GM12878 (cell line): ENCODE measurements at regions of chr1 and their contacts with region 1.

Region 1: DNA sequence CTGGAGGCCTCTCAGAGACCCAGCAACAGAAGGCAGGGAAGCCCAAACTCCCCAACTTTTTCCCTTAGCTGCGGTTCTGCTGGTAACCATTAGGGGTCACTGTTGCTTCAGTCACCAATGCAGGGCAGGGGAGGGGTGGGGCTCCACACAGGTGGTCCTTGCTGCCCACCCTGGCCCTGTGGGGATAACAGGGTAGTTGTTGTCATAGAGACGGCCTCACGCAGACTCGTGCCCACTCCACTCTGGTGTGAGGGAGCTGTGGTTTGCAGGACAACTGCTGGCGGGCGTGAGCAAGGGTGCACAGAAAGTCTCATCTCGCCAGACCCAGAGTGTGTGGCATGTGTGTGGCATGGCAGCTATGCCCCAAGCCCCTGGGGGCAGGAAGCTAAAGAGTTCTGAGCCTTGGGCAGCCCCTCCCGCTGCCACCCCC is 19.9 kb downstream of the INSRR start:
- DNase-seq: no peak
- ATAC-seq: peak; percentile 57
- H3K4me3 ChIP-seq: no peak overlapping the region
- H3K27ac ChIP-seq: no peak overlapping the region
- H3K4me1 ChIP-seq: peaks cover 24% of the 10 kb centered on the region
- H3K27me3 ChIP-seq: no peaks in the 10 kb centered on the region; a peak in 1 of 4 replicates
- CTCF ChIP-seq: peak; percentile 80 to 94 (median 91)
- EP300 ChIP-seq: no peak
- POLR2A ChIP-seq: no peak
- RAD21 ChIP-seq: peak; percentile 86

Region 2: DNA sequence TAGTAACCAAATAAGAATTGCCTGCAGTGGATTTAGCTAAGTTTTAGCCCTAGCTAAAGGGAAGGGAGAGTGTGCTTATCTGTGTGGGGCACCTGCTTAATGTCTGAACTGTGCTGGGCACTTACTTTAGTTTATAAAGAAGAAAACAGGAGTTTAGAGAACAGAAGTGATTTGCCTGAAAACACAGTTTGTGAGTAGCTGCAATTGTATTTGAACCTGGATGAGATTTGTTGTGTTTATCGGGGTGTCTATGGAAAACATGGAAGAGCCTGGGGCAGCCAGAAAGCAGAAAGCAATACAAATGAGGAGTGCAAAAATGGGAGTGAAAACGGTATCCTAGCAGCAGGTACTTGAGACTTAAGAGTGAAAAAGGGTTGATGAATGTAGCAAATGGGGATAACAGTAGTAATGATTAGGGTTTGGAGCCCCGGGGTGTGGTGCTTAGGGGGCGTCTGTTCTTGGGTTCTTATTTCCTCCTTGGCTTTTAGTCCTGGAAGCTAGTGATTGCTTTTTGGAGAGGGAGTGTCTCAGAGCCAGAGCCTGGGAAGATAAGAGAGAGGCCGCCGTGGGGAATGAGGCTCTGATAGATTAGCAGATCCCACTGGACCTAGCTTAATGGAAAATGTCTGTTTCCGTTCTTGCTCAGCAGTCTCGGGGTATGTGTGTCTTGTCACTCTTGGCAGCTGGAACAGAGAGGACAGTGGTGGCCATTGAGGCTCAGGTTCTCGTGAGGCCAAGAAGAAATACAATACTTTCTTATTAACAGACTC is 66.1 kb before region 1 on chr1:
- CTCF ChIA-PET with region 1: interaction called, 15 read pairs
- POLR2A ChIA-PET with region 1: no interaction called
- RAD21 ChIA-PET with region 1: interaction called, 3 read pairs
- SMC1A ChIA-PET with region 1: interaction called, 5 read pairs
- in situ Hi-C with region 1: no loop called
- intact Hi-C with region 1: no loop called
- DNase-seq: no peak
- ATAC-seq: peak; percentile 6; the same call in 2 of the 3 replicates
- H3K4me3 ChIP-seq: peak overlapping the region; percentile 42; the same call in 1 of the 2 replicates
- H3K27ac ChIP-seq: no peak overlapping the region
- H3K4me1 ChIP-seq: no peaks in the 10 kb centered on the region
- H3K27me3 ChIP-seq: no peaks in the 10 kb centered on the region
- CTCF ChIP-seq: no peak
- EP300 ChIP-seq: no peak
- POLR2A ChIP-seq: no peak
- RAD21 ChIP-seq: no peak

Region 3: DNA sequence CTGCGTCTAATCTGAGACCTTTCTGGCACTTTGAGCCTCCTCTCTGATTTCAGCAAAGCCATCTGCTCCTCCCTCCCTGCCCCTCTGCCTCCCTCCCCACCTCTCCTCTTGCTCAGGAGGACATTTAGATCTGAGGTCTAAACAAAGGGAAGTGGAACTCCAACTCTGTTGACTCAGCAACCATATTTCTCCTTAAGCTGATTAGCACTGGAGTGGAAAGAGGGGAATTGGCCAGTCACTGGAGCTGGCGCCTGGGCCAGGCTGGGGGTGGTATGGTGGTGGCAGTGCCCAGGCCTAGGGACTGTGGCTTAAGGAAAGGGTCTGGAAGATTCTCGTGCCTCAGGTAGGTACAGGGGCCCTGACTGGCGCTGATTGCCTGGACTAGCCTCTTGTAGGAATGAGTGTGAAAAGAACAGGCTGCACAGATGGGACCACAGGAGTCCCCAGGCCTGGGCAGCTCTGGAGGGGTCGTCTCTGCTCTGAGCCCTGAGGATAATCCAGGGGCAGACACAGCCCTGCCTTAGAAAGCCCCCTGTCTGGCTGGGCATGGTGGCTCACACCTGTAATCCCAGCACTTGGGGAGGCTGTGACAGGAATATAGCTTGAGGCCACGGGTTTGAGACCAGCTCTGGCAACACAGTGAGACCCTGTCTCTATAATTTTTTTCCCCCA is 34.3 kb before region 1 on chr1:
- CTCF ChIA-PET with region 1: interaction called, 52 read pairs
- POLR2A ChIA-PET with region 1: interaction called, 3 read pairs
- RAD21 ChIA-PET with region 1: interaction called, 22 read pairs
- SMC1A ChIA-PET with region 1: interaction called, 21 read pairs
- in situ Hi-C with region 1: no loop called
- intact Hi-C with region 1: loop called (anchors 5 kb)
- DNase-seq: no peak
- ATAC-seq: peak; percentile 39
- H3K4me3 ChIP-seq: no peak overlapping the region
- H3K27ac ChIP-seq: no peak overlapping the region
- H3K4me1 ChIP-seq: peaks cover 18% of the 10 kb centered on the region
- H3K27me3 ChIP-seq: no peaks in the 10 kb centered on the region
- CTCF ChIP-seq: no peak
- EP300 ChIP-seq: no peak
- POLR2A ChIP-seq: no peak
- RAD21 ChIP-seq: no peak

Region 4: DNA sequence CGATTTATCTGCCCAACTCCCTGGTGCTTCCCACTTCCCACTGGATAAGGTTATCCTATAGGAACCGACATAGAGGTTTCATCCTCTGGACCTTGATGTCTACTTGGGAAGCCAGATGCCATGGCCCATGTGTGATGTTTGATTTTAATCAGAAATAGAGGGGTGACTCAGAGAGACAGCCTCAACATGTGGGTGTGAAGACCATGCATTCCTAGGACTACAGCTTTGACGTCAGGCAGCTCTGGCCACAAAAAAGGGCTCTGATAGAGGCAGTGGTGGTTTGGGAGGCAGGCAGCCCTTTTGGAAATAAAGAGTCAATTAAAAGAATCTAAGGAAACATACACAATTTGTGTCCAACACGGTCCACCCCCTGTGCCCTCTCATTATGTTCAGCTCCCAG is 17.2 kb before region 1 on chr1:
- CTCF ChIA-PET with region 1: interaction called, 19 read pairs
- POLR2A ChIA-PET with region 1: interaction called, 3 read pairs
- RAD21 ChIA-PET with region 1: interaction called, 6 read pairs
- SMC1A ChIA-PET with region 1: interaction called, 20 read pairs
- in situ Hi-C with region 1: no loop called
- intact Hi-C with region 1: no loop called
- DNase-seq: no peak
- ATAC-seq: no peak
- H3K4me3 ChIP-seq: no peak overlapping the region
- H3K27ac ChIP-seq: no peak overlapping the region
- H3K4me1 ChIP-seq: peaks cover 4% of the 10 kb centered on the region
- H3K27me3 ChIP-seq: no peaks in the 10 kb centered on the region
- CTCF ChIP-seq: no peak
- EP300 ChIP-seq: no peak
- POLR2A ChIP-seq: no peak
- RAD21 ChIP-seq: no peak

Region 5: DNA sequence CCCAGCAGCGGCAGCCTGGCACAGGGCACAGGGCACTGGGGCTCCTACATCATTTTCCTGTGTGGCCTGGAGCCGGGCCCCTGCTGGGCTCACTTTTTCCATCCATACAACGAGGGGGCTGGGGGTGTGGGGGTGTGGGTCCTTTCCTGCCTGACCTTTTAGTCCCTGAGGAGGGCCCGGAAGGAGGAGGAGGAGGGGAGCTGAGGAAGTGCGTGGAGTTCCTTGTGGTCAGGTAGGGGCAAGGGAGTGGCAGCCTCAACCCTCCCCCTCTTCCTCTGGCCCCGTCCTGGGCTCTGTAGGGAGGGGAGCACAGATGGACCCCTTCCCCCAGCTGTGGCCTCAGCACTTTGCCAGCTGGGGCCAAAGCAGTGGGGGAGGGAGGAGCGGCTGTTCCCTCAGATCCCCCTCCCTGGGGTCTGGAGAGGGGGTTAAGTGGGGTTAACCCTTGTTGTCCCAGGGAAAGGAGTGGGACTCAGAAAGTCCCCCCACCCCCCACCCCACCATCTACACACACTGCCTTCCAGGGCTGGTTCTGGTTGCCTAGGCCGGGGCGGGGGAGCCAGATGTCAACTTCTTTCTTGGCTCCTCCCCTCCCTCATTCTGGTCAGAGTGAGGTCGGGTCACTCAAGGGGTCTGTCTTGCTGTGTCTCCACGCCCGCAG is 27.4 kb after region 1 on chr1:
- CTCF ChIA-PET with region 1: interaction called, 248 read pairs
- POLR2A ChIA-PET with region 1: no interaction called
- RAD21 ChIA-PET with region 1: interaction called, 113 read pairs
- SMC1A ChIA-PET with region 1: interaction called, 123 read pairs
- in situ Hi-C with region 1: no loop called
- intact Hi-C with region 1: no loop called
- DNase-seq: no peak
- ATAC-seq: no peak
- H3K4me3 ChIP-seq: no peak overlapping the region
- H3K27ac ChIP-seq: no peak overlapping the region
- H3K4me1 ChIP-seq: peaks cover 13% of the 10 kb centered on the region
- H3K27me3 ChIP-seq: peaks cover 0 to 4% of the 10 kb centered on the region in 2 experiments; a peak in 3 of 4 replicates
- CTCF ChIP-seq: no peak
- EP300 ChIP-seq: no peak
- POLR2A ChIP-seq: no peak
- RAD21 ChIP-seq: no peak

Region 6: DNA sequence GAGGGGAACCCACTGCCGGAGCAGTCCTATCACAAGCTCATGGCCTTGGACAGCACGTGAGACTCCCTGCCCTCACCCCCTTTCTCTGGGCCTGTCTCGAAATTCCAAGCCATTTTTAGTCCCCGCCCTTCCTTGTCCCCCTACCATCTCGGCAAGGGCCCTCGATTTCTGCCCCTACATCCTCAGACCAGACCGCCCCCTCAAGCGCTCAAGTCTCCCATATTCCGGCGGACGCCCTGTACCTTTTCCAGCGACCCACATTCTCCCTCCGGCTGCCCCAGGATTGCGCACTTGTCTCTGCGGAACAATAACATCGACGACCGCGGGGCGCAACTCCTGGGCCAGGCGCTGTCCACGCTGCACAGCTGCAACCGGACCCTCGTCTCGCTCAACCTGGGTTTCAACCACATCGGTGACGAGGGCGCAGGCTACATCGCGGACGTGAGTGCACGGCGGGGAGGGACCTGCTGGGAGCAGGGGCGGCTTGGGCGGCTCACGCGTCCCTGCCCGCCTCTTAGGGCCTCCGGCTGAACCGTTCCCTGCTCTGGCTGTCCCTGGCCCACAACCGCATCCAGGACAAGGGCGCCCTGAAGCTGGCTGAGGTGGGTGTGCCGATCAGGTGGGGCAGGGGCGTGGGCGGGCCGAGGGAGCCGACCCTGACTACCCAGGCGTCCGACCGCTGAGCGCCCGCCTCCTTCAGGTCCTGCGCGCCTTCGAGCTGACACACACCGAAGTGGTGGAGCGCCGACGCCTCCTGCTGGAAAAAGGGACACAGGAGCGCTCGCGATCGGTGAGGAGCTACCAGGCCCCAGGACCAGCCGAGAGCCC is 88.4 kb after region 1 on chr1:
- CTCF ChIA-PET with region 1: no interaction called
- POLR2A ChIA-PET with region 1: no interaction called
- RAD21 ChIA-PET with region 1: no interaction called
- SMC1A ChIA-PET with region 1: no interaction called
- in situ Hi-C with region 1: no loop called
- intact Hi-C with region 1: no loop called
- DNase-seq: no peak
- ATAC-seq: peak; percentile 79
- H3K4me3 ChIP-seq: no peak overlapping the region
- H3K27ac ChIP-seq: no peak overlapping the region
- H3K4me1 ChIP-seq: no peaks in the 10 kb centered on the region
- H3K27me3 ChIP-seq: peaks cover 16 to 22% of the 10 kb centered on the region in 2 experiments
- CTCF ChIP-seq: peak; percentile 53 to 76 (median 66)
- EP300 ChIP-seq: no peak
- POLR2A ChIP-seq: no peak
- RAD21 ChIP-seq: peak; percentile 52

Region 7: DNA sequence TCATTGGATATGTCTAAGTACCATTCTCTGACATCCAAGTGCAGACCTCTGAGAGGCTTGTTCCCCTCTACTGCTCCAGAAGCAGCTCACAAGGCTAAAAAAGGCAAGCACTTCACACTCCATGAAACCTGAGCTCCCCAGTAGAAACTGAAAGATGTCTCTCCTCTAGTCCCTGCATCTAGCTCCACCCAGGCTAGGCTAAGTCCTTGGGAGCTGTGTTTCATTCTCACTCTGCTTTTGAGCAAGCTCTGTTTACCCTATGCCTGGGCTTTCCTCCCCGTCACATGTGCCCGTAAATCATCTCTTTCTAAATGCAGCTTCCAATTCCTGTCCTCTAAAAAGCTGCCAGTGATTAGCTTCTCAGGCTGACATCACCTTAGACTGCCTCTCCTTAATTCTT is 120.4 kb after region 1 on chr1:
- CTCF ChIA-PET with region 1: no interaction called
- POLR2A ChIA-PET with region 1: no interaction called
- RAD21 ChIA-PET with region 1: no interaction called
- SMC1A ChIA-PET with region 1: no interaction called
- in situ Hi-C with region 1: no loop called
- intact Hi-C with region 1: no loop called
- DNase-seq: no peak
- ATAC-seq: no peak
- H3K4me3 ChIP-seq: no peak overlapping the region
- H3K27ac ChIP-seq: no peak overlapping the region
- H3K4me1 ChIP-seq: peaks cover 3% of the 10 kb centered on the region
- H3K27me3 ChIP-seq: no peaks in the 10 kb centered on the region; a peak in 1 of 4 replicates
- CTCF ChIP-seq: no peak
- EP300 ChIP-seq: no peak
- POLR2A ChIP-seq: no peak
- RAD21 ChIP-seq: no peak

Region 8: GRCh38 chr1:157147906-157148717 is 309.1 kb after region 1 on chr1:
- CTCF ChIA-PET with region 1: no interaction called
- POLR2A ChIA-PET with region 1: no interaction called
- RAD21 ChIA-PET with region 1: no interaction called
- SMC1A ChIA-PET with region 1: no interaction called
- in situ Hi-C with region 1: no loop called
- intact Hi-C with region 1: no loop called
- DNase-seq: no peak
- ATAC-seq: peak; percentile 64
- H3K4me3 ChIP-seq: no peak overlapping the region
- H3K27ac ChIP-seq: no peak overlapping the region
- H3K4me1 ChIP-seq: no peaks in the 10 kb centered on the region; the same call in 1 of the 2 replicates
- H3K27me3 ChIP-seq: no peaks in the 10 kb centered on the region
- CTCF ChIP-seq: no peak
- EP300 ChIP-seq: no peak
- POLR2A ChIP-seq: no peak
- RAD21 ChIP-seq: no peak